Dendritic cell treated with granulocyte-macrophage colony-stimulating factor and Interleukin-4, amounts not matched to agents 40 ng/mL and 50 ng/mL, for 4 days (primary cell): ENCODE measurements at regions of chr10 and their contacts with region 1.

Region 1: DNA sequence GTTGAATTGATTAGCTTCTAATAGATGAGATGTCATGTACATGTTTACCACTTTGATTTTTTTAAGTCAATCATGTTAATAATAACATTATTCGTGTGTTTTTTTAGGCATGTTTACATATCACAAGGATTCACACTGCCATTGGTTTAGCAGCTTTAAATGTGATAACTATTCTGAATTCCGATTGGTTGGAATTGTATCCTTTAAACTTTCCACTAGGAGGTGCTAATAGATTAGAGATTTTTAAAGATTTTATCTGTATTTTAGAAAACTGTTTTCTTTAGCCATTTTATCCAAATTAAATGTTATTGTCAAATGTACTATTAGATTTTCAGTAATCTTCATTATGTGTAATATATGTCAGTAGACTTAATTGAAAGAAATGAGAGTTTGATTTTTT is 83.2 kb downstream of the HECTD2 start:
- H3K4me3 Mint-ChIP-seq: no peak overlapping the region
- H3K27ac Mint-ChIP-seq: no peak overlapping the region
- H3K4me1 Mint-ChIP-seq: no peaks in the 10 kb centered on the region
- H3K27me3 Mint-ChIP-seq: no peaks in the 10 kb centered on the region

Region 2: DNA sequence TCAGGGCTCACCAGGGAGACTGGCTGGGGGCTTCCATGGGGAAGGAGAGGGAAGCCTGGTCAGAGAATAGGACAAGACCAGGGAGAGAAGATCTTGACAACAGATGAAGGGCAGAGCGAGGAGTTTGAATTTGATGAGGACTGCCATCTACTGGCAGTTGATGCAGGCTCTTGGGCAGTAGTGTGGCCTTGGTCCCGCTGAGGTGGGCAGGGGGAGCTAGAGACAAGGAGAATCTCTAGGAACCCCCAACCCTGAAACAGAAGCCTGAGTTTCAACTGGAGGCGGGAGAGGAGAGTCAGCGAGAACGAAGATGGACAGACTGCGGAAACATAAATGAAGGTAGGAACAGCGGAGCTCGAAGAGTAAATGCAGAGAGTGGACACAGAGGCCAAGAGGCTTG is 58.5 kb after region 1 on chr10:
- intact Hi-C with region 1: loop called (anchors 5 kb)
- H3K4me3 Mint-ChIP-seq: no peak overlapping the region
- H3K27ac Mint-ChIP-seq: no peak overlapping the region
- H3K4me1 Mint-ChIP-seq: no peaks in the 10 kb centered on the region
- H3K27me3 Mint-ChIP-seq: peaks cover 4% of the 10 kb centered on the region

Region 3: DNA sequence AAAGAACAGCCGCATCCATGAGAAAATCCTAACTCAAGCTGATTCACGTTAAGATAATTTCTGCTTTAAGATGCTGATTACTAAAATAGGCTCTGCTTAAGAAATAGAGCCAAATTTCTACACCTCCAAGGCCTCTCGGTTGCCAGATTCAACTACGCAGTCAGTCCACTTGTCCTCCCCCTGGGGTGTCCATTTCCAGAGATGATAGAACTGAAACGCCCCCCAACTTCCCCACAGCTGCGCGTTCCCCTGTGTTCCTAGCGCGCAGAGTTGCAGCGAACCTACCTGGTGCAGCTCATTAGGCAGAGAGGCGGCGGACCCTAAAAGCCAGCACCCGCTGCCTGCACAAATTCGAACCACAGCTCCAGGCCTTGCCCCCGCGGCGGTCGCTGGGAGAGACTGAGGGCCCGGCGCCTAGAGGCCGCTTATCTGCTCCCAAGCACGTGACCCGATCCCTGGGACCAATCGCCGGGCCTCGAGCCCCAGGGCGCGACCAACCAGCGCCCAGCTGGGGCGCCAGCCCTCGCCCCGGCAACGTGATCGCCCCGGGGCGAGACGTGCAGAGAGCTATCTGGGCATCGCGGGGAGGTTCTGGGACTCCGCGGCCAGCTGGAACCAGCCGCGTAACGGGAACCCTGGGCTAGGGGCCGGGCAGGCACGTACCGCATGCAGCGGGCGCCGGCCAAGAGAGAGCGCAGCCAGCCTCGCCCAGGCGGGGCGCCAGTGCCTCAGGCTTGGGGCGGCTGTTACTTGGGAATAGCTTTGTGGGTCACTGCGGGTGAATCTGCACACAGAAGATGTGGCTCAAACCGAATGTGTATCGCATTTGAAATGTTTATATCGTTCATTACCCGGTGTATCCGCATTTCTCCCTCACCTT is 139.6 kb after region 1 on chr10 and contains the start of gene PPP1R3C:
- intact Hi-C with region 1: loop called (anchors 2 kb)
- H3K4me3 Mint-ChIP-seq: peak within 1 kb of the TSS; percentile 67
- H3K27ac Mint-ChIP-seq: no peak within 1 kb of the TSS
- H3K4me1 Mint-ChIP-seq: peaks cover 8% of the 10 kb centered on the region
- H3K27me3 Mint-ChIP-seq: peaks cover 39% of the 10 kb centered on the region

Region 4: DNA sequence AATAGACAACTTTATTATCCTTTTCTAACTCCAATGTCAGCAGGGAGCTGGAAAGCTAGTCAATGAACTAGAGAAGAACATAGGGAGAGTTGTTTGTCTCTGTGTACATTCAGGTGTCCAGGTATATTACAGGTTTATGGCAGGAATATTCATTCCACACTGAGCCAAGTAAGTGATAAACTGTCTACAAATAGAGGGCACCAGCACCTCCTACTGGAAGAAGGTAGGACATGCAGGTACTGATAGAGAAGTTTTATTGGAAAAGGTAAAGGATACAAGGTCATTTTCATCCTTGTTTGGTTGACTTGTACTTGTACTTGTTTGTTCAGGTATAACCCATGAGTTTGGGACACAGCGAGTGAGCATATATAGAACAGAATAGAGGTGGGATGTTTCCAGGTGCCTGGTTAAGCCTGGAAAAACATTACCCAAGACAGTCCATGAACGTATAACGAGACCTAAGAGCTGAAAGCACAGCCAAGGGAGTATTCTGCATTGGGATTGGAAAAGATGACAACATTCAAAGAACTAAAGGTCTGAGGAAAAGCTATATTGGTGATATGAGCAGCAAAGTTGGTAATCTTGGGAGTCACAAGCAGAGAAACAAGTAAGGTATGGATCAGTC is 201.0 kb after region 1 on chr10:
- intact Hi-C with region 1: loop called (anchors 5 kb)
- H3K4me3 Mint-ChIP-seq: no peak overlapping the region
- H3K27ac Mint-ChIP-seq: no peak overlapping the region
- H3K4me1 Mint-ChIP-seq: no peaks in the 10 kb centered on the region
- H3K27me3 Mint-ChIP-seq: no peaks in the 10 kb centered on the region